Posterior vena cava (tissue), 2 donors: ENCODE measurements at regions of chr10 and their contacts with region 1.

Region 1: GRCh38 chr10:34323192-34323591 is 491.9 kb downstream of the PARD3 start:
- DNase-seq: no peak

Region 2: GRCh38 chr10:34348917-34349485 is 25.8 kb after region 1 on chr10:
- intact Hi-C with region 1: loop called in 1 of 2 experiments (anchors 1 kb)
- DNase-seq: no peak